ENCODE measurements at regions of chr7 and their contacts with region 1.

Region 1: DNA sequence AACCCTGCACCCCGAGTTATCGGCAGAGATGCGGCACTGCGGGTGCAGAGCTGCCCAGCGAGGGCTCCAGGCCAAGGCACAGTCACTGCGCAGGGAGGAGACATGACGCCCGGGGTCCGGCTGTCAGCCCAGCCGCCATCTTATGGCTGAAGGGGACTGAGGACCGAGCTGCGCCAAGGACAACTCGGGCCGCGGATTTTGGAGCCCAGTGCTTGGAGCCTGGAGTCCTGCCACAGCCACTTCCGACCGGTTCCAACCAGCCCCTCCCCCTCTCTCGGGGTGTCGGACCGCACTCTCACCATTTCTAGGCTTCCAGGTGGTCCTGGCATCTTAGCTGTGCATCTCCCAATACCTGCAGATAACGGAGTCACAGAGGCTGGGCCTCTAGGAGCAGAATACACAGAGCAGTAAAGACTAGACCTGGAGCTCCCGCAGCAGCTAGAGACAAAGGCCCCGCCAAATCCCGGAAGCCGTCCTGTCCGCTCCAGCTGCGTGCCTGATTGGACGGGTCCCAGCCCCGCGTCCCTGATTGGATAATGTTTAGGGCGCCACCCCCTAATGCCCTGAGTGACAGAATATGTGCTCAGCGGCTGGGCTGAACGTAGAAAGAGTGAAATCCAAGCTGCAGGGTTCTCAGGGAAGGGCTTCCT is at the start of gene ZNF680:
- DNase-seq: peak; percentile 91 to 99
- H3K4me3 ChIP-seq: peak within 1 kb of the TSS; percentile 67 to 80
- H3K27ac ChIP-seq: peak within 1 kb of the TSS; percentile 79 to 89
- H3K4me1 ChIP-seq: peaks cover 2 to 26% of the 10 kb centered on the region in 2 donors
- H3K27me3 ChIP-seq: no peaks in the 10 kb centered on the region
- CTCF ChIP-seq: no peak
- total RNA-seq, gene ZNF680: 11.0 TPM

Region 2: DNA sequence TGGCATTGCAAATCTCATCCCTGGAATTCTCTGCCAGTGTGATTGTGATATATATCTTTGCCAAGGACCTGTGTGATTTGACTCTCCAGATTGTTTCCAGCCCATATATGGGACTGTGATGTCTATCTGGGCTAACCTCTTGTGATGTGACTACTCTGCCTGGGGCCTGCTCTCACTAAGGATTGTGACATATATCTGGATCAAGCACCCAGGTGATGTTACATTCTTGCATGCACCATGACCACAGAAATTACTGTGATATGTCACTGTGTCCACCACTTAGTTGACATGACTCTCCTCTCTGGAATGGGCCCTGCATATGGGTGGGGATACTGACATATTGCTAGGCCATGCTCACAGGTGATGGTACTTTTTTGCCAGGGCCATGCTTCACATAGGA is 162.3 kb before region 1 on chr7:
- intact Hi-C with region 1: no loop called
- DNase-seq: no peak
- H3K4me3 ChIP-seq: no peak overlapping the region
- H3K27ac ChIP-seq: no peak overlapping the region
- H3K4me1 ChIP-seq: no peaks in the 10 kb centered on the region
- H3K27me3 ChIP-seq: no peaks in the 10 kb centered on the region
- CTCF ChIP-seq: no peak

Region 3: DNA sequence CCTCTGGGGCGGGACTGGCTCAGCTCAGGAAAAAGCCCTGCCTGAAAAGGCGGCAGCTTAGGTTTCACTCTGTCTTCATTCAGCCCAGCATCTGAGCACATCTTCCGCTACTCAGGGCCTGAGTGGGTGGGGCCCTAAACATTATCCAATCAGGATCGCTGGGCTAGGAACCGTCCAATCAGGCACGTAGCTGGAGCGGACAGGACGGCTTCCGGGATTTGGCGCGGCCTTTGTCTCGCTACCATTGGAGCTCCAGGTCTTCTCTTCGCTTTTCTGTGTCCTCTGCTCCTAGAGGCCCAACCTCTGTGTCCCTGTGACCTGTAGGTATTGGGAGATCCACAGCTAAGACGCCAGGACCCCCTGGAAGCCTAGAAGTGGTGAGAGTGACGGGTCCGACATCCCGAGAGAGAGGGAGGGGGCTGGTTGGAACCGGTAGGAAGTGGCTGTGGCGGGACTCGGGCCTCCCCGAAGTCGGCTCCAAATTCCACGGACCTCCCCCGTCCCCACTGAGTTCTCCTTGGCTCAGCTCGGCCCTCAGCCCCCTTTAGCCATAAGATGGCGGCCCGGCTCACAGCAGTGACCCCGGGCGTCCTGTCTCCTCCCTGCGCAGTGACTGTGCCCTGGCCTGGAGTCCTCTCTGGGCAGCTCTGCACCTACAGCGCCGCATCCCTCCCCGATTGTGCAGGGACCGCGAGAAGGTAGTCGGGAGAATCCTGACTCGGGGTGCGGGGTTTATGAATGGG is 98.9 kb before region 1 on chr7:
- intact Hi-C with region 1: loop called (anchors 5 kb)
- DNase-seq: peak; percentile 56 to 78
- H3K4me3 ChIP-seq: peak overlapping the region; percentile 33 to 77
- H3K27ac ChIP-seq: peak overlapping the region in 1 of 2 donors; percentile 49
- H3K4me1 ChIP-seq: no peaks in the 10 kb centered on the region
- H3K27me3 ChIP-seq: no peaks in the 10 kb centered on the region
- CTCF ChIP-seq: no peak

Region 4: DNA sequence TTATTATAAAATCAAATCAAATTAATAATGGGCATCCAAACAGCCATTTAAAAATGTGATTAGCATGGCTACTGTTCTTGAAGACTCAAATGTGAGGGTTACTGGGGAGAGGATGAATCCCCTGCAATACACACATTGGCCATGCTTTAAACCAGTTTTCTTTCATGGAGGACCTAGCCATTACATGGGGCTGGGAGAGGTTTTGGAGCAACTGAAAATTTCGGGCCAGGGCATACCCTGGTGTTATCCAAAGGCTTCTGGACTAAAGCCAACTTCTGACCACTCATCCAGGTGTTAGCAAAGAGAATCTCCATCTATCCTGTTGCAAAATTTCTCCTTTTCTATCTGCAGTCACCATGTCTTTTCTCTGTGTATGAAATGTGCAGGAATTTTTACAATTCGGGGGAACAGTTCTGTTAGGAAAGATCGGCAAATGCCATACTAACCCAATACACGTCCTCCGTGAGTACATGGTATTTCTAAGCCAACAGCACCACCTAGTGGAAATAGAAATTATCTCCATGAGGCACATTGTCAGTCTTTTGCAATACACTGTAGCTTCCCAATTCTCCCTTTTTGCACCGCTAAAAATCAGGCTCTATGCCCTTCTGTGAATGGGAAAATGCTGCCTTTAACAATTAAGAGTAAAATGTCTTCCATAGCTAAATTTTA is 56.2 kb after region 1 on chr7:
- intact Hi-C with region 1: loop called (anchors 5 kb)
- DNase-seq: no peak
- H3K4me3 ChIP-seq: no peak overlapping the region
- H3K27ac ChIP-seq: no peak overlapping the region
- H3K4me1 ChIP-seq: no peaks in the 10 kb centered on the region
- H3K27me3 ChIP-seq: no peaks in the 10 kb centered on the region
- CTCF ChIP-seq: peak; percentile 42 to 69 (median 43)

Region 5: DNA sequence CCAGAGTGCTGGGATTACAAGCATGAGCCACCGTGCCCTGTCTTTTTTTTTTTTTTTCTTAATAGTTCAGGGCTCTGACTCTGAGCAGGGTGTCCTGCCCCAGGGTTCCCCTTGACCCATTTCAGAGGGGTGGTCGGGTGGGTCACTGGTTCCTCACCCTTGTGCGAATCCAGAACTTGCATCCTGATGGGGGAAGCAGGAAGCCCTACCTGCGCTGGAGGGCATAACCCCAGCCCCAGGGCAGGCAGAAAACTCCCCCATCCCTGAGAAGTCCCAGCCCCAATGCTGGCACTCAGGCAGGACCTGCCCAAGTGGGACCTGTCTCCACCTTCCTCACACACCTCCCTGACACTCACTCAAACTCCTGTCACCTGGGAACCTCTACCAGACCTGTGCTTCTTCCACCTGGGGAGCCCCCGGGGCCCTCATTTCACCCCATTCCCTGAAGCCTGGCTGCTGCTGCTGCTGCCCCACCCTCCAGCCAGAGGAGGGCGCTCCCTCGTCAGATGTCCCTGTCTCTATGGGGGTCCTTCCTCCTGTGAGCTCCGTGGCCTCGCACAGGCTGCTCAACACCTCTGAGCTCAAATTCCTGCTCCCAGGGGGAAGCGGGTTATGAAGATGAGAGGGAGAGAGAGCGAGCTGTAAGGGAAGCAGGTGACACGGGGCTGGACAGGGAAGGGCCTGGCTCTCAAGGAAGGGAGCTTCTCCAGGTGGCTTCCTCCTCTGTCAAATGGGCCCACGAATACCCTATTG is 325.2 kb after region 1 on chr7:
- intact Hi-C with region 1: no loop called
- DNase-seq: no peak
- H3K4me3 ChIP-seq: peak overlapping the region; percentile 51 to 56
- H3K27ac ChIP-seq: no peak overlapping the region
- H3K4me1 ChIP-seq: peaks cover 3 to 25% of the 10 kb centered on the region in 2 donors
- H3K27me3 ChIP-seq: no peaks in the 10 kb centered on the region
- CTCF ChIP-seq: peak; percentile 16 to 46 (median 33)

Region 6: GRCh38 chr7:64902806-64903721 is 340.3 kb after region 1 on chr7 and contains the start of gene ZNF273:
- intact Hi-C with region 1: loop called (anchors 10 kb)
- DNase-seq: peak; percentile 83 to 96
- H3K4me3 ChIP-seq: peak within 1 kb of the TSS; percentile 82 to 88
- H3K27ac ChIP-seq: peak within 1 kb of the TSS; percentile 73 to 85
- H3K4me1 ChIP-seq: peaks cover 0 to 5% of the 10 kb centered on the region in 2 donors
- H3K27me3 ChIP-seq: no peaks in the 10 kb centered on the region
- CTCF ChIP-seq: no peak
- total RNA-seq, gene ZNF273: 1.7 TPM

Region 7: GRCh38 chr7:65373608-65374351 is 811.0 kb after region 1 on chr7 and contains the start of gene ZNF92:
- intact Hi-C with region 1: loop called (anchors 5 kb)
- DNase-seq: peak; percentile 93 to 98
- H3K4me3 ChIP-seq: peak within 1 kb of the TSS; percentile 70 to 94
- H3K27ac ChIP-seq: peak within 1 kb of the TSS; percentile 86 to 91
- H3K4me1 ChIP-seq: peaks cover 0 to 14% of the 10 kb centered on the region in 2 donors
- H3K27me3 ChIP-seq: no peaks in the 10 kb centered on the region
- CTCF ChIP-seq: no peak
- total RNA-seq, gene ZNF92: 4.0 TPM